CD4-positive, alpha-beta T cell (primary cell): ENCODE measurements at regions of chr4 and their contacts with region 1.

Region 1: GRCh38 chr4:52545099-52546069 is 113.7 kb downstream of the USP46 start:
- DNase-seq: peak; percentile 24 to 72 (median 48)
- ATAC-seq: no peak
- H3K4me3 ChIP-seq: no peak overlapping the region
- H3K4me3 Mint-ChIP-seq: no peak overlapping the region
- H3K27ac ChIP-seq: no peak overlapping the region
- H3K27ac Mint-ChIP-seq: no peak overlapping the region
- H3K4me1 ChIP-seq: peaks cover 4% of the 10 kb centered on the region
- H3K4me1 Mint-ChIP-seq: no peaks in the 10 kb centered on the region
- H3K27me3 ChIP-seq: peaks cover 0 to 6% of the 10 kb centered on the region in 2 experiments
- H3K27me3 Mint-ChIP-seq: peaks cover 23% of the 10 kb centered on the region
- CTCF ChIP-seq: peak; percentile 73

Region 2: DNA sequence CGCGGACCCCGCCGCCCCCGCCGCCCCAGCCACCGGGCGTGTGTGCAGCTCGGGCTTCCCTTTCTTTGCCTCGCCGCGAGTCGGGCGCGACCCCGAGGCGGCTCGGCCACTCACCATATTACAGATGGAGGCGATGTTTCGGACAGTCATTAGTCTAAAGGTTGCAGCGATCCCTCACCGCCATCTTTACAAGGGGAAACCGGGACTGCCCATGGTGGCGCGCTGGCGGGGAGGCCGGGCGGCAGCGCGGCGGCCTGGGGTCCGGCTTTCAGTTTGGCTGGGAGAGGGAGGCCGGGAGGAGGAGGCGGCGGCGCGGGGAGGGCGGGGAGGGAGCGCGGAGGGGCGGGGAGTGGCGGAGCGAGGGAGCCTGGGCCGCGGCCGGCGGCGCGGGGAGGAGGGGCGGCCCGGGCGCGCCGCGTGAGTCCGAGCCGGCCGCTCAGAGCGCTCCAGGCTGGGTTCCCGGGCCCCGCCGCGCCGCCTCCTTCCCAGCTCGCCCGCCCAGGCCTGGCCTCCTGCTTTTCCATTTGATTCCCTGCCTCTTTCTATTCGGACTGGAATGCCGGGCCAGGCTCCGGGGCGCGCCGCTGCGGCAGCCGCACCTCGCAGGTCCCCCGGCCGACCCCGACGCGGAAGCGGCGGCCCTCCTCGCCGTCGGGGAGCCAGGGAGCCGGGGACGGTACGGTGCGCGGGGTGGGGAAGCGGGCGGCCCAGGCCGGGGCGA is 113.8 kb after region 1 on chr4 and contains the start of gene USP46:
- CTCF ChIA-PET with region 1: interaction called, 3 read pairs
- POLR2A ChIA-PET with region 1: no interaction called
- intact Hi-C with region 1: loop called in 1 of 2 experiments (anchors 10 kb)
- DNase-seq: peak in 13 of 14 experiments; percentile 2 to 73 (median 37)
- ATAC-seq: peak; percentile 70
- H3K4me3 ChIP-seq: peak within 1 kb of the TSS; percentile 74
- H3K4me3 Mint-ChIP-seq: peak within 1 kb of the TSS; percentile 94
- H3K27ac ChIP-seq: no peak within 1 kb of the TSS
- H3K27ac Mint-ChIP-seq: peak within 1 kb of the TSS; percentile 73
- H3K4me1 ChIP-seq: peaks cover 24% of the 10 kb centered on the region
- H3K4me1 Mint-ChIP-seq: peaks cover 38% of the 10 kb centered on the region
- H3K27me3 ChIP-seq: no peaks in the 10 kb centered on the region
- H3K27me3 Mint-ChIP-seq: peaks cover 25% of the 10 kb centered on the region
- CTCF ChIP-seq: no peak
- total RNA-seq, gene USP46: 6.8 to 10.5 TPM

Region 3: DNA sequence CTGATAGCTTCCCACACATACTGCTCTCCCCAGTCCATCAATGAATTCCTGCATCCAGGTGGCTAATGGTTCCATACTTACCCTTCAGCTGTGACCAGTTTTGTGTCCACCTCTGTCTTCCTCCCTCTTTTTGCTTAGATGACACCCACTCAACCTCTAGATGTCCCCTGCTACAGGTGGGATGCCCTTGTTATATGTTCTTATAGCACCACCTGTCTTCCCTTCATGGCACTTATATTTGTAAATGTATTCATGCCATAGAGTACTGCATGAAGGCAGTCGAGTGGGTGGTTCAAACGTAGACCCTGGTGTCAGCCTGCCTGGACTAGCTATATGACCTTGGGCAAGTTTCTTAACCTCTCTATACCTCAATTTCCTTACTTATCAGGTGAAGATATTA is 120.2 kb after region 1 on chr4:
- CTCF ChIA-PET with region 1: interaction called, 3 read pairs
- POLR2A ChIA-PET with region 1: no interaction called
- intact Hi-C with region 1: loop called (anchors 5 to 10 kb)
- DNase-seq: peak in 3 of 14 experiments; percentile 31 to 42 (median 41)
- ATAC-seq: peak; percentile 37
- H3K4me3 ChIP-seq: no peak overlapping the region
- H3K4me3 Mint-ChIP-seq: no peak overlapping the region
- H3K27ac ChIP-seq: no peak overlapping the region
- H3K27ac Mint-ChIP-seq: no peak overlapping the region
- H3K4me1 ChIP-seq: peaks cover 3% of the 10 kb centered on the region
- H3K4me1 Mint-ChIP-seq: peaks cover 7% of the 10 kb centered on the region
- H3K27me3 ChIP-seq: peaks cover 0 to 2% of the 10 kb centered on the region in 2 experiments
- H3K27me3 Mint-ChIP-seq: peaks cover 53% of the 10 kb centered on the region
- CTCF ChIP-seq: no peak

Region 4: DNA sequence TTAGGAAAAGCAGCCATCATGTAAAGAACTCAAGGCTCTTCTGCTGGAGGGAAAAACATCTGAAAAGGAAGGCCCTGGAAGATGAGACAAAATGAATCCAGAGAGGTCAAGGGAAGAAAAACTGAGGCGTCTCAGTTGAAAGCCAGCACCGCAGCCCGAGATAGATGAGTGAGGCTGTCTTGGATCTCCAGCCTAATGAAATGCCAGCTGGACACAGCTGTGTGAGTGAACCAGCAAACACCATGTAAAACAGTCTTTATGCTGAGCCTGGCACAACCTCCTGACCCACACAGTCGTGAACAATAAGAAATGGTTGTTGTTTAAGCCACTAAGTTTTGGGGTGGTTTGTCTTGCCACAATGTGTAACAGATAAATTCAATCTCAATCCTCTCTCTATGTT is 268.2 kb after region 1 on chr4:
- CTCF ChIA-PET with region 1: no interaction called
- POLR2A ChIA-PET with region 1: no interaction called
- intact Hi-C with region 1: no loop called
- DNase-seq: no peak
- ATAC-seq: no peak
- H3K4me3 ChIP-seq: no peak overlapping the region
- H3K4me3 Mint-ChIP-seq: no peak overlapping the region
- H3K27ac ChIP-seq: no peak overlapping the region
- H3K27ac Mint-ChIP-seq: no peak overlapping the region
- H3K4me1 ChIP-seq: no peaks in the 10 kb centered on the region
- H3K4me1 Mint-ChIP-seq: no peaks in the 10 kb centered on the region
- H3K27me3 ChIP-seq: peaks cover 0 to 2% of the 10 kb centered on the region in 2 experiments
- H3K27me3 Mint-ChIP-seq: peaks cover 3% of the 10 kb centered on the region
- CTCF ChIP-seq: no peak

Region 5: GRCh38 chr4:52983563-52984303 is 438.3 kb after region 1 on chr4:
- CTCF ChIA-PET with region 1: interaction called, 7 read pairs
- POLR2A ChIA-PET with region 1: interaction called, 3 read pairs
- intact Hi-C with region 1: loop called in 1 of 2 experiments (anchors 2 kb)
- DNase-seq: peak in 3 of 14 experiments; percentile 61 to 64 (median 62)
- ATAC-seq: no peak
- H3K4me3 ChIP-seq: no peak overlapping the region
- H3K4me3 Mint-ChIP-seq: no peak overlapping the region
- H3K27ac ChIP-seq: no peak overlapping the region
- H3K27ac Mint-ChIP-seq: no peak overlapping the region
- H3K4me1 ChIP-seq: no peaks in the 10 kb centered on the region
- H3K4me1 Mint-ChIP-seq: peaks cover 4% of the 10 kb centered on the region
- H3K27me3 ChIP-seq: no peaks in the 10 kb centered on the region
- H3K27me3 Mint-ChIP-seq: no peaks in the 10 kb centered on the region
- CTCF ChIP-seq: peak; percentile 81

Region 6: GRCh38 chr4:54197926-54198325 is 1652.5 kb after region 1 on chr4:
- CTCF ChIA-PET with region 1: no interaction called
- POLR2A ChIA-PET with region 1: no interaction called
- intact Hi-C with region 1: no loop called
- DNase-seq: no peak
- ATAC-seq: no peak
- H3K4me3 ChIP-seq: no peak overlapping the region
- H3K4me3 Mint-ChIP-seq: no peak overlapping the region
- H3K27ac ChIP-seq: no peak overlapping the region
- H3K27ac Mint-ChIP-seq: no peak overlapping the region
- H3K4me1 ChIP-seq: no peaks in the 10 kb centered on the region
- H3K4me1 Mint-ChIP-seq: no peaks in the 10 kb centered on the region
- H3K27me3 ChIP-seq: no peaks in the 10 kb centered on the region
- H3K27me3 Mint-ChIP-seq: peaks cover 19% of the 10 kb centered on the region
- CTCF ChIP-seq: no peak